Heart right ventricle (tissue), 16 donors: ENCODE measurements at regions of chr14 and their contacts with region 1.

Region 1: GRCh38 chr14:51202914-51203665 is 37.0 kb upstream of the TMX1 start:
- DNase-seq: no peak
- ATAC-seq: no peak
- H3K4me3 ChIP-seq: no peak overlapping the region
- H3K27ac ChIP-seq: no peak overlapping the region
- H3K4me1 ChIP-seq: no peaks in the 10 kb centered on the region
- H3K27me3 ChIP-seq: peaks cover 0 to 3% (median 0%) of the 10 kb centered on the region in 7 donors
- CTCF ChIP-seq: no peak

Region 2: DNA sequence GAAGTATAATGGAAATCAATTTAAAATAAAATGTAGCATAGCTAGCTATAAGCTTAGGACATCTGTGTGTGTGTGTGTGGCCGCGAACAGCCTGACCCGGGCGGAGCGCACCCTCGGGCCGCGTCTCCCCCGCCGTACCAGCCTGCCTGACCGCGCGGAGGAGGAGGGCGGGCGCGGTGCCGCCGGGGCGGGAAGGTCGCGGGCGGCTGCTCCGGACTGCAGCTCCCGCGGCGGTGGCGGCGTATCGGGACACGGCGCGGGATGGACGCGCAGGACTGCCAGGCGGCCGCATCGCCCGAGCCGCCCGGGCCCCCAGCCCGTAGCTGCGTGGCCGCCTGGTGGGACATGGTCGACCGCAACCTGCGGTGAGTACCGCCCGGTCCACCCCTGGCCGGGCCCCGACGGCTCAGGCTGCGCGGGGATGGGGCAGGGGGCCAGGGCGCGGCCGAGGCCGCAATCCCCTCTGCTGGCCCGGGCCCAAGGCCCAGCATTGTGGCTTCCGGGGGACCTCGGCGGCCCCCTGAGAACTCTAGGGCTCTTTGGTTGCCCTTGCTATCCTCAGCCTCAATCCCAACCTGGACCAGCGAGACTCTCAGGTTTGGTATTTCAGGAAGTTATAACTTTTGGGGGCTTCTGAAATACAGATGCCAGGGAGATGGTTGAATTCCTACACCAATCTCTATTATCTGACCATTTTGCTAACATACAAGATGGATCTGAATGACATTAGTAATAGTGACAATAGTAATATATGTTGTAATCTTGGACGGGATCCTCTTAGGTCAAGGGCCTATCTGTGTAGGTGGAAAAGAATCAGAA is 331.0 kb before region 1 on chr14 and contains the start of gene ABHD12B:
- intact Hi-C with region 1: no loop called
- DNase-seq: no peak
- ATAC-seq: peak in 1 of 8 donors; percentile 69
- H3K4me3 ChIP-seq: peak within 1 kb of the TSS in 8 of 10 donors; percentile 8 to 39 (median 21)
- H3K27ac ChIP-seq: no peak within 1 kb of the TSS
- H3K4me1 ChIP-seq: peaks cover 0 to 17% (median 0%) of the 10 kb centered on the region in 9 donors
- H3K27me3 ChIP-seq: peaks cover 9 to 52% (median 38%) of the 10 kb centered on the region in 7 donors
- CTCF ChIP-seq: no peak
- total RNA-seq, gene ABHD12B: not detected

Region 3: DNA sequence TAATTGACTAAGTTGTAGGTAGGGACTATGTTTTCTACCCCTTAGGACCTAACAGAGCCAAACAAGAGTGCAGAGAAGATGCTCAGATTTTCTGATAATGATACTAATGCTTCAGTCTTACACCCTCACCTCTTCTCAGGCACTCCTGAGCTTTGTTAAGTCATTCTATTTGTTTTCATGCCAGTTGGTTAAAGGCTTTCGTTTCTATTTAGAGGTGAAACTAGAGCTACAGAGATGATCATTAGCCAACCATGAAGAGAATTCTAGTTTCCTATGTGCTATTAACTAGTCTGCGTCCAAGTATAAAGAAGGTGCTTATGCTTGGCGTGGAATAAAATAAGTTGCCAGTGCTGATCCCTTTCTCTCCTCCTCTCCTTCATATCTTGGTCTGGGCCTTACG is 224.2 kb before region 1 on chr14:
- intact Hi-C with region 1: loop called in 1 of 10 experiments (anchors 10 kb)
- DNase-seq: no peak
- ATAC-seq: no peak
- H3K4me3 ChIP-seq: no peak overlapping the region
- H3K27ac ChIP-seq: no peak overlapping the region
- H3K4me1 ChIP-seq: peaks cover 0 to 6% (median 0%) of the 10 kb centered on the region in 9 donors
- H3K27me3 ChIP-seq: peaks cover 0 to 7% (median 0%) of the 10 kb centered on the region in 7 donors
- CTCF ChIP-seq: no peak

Region 4: GRCh38 chr14:51139121-51139681 is 63.9 kb before region 1 on chr14:
- intact Hi-C with region 1: no loop called
- DNase-seq: no peak
- ATAC-seq: peak in 1 of 8 donors; percentile 20
- H3K4me3 ChIP-seq: no peak overlapping the region
- H3K27ac ChIP-seq: no peak overlapping the region
- H3K4me1 ChIP-seq: no peaks in the 10 kb centered on the region
- H3K27me3 ChIP-seq: no peaks in the 10 kb centered on the region
- CTCF ChIP-seq: no peak

Region 5: DNA sequence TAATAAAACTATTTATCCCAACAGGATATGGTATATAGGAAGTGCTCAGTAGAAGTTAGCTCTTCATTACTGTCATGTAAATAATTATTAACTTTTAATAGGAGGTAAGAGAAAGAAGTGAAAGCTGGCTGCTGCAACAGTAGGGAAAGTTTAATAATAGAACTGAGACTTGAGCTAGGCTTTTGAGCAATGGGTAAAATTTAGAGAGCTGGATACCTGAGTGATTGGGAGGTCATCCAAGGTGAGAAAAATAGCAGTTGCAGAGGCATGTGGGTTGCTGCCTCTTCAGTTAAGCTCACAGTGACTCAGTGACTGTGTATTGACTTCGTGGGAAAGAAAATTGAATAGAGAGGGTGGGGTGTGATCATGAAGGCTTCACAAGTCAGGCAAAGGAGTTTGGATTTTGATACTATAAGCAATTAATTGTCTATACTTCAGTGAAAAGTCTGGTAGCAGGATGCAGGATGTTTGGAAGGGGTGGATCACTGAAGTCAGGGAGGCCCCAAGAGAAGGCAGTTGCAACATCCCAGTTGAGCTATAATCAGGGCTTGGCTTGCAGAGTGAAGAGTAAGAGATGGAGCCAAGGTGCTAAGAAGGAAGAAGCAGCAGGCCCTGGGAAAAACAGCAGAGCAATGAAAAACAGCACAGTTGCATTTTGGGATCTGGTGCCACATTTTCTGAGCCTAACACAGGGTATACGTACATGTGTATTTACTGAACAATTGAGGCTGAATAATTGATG is 276.7 kb after region 1 on chr14:
- intact Hi-C with region 1: no loop called
- DNase-seq: peak in 1 of 2 donors; percentile 18
- ATAC-seq: peak in 7 of 8 donors; percentile 58 to 94 (median 71)
- H3K4me3 ChIP-seq: no peak overlapping the region
- H3K27ac ChIP-seq: no peak overlapping the region
- H3K4me1 ChIP-seq: peaks cover 0 to 8% (median 0%) of the 10 kb centered on the region in 9 donors
- H3K27me3 ChIP-seq: no peaks in the 10 kb centered on the region
- CTCF ChIP-seq: no peak